Right ventricle myocardium superior (tissue), 1 donor: ENCODE measurements at regions of chrX and their contacts with region 1.

Region 1: DNA sequence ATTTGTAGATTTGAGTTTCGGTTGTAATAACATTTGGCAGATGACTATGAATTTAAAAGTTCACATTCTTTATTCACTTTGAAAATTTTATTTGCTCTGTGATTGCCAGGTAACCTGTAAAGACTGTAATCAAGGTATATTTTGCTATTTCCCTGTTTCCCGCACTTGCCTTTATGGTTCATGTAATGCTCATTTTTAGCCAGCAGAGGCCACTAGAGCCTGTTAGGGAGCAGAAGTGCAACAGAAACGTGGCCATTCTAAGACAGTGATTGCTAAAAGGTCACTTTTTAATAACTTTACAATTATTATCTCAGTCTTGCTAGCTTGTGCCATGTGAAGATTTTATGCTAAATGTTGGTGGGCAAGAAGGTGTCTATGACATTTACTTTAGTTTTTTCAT is 12.4 kb downstream of the YIPF6 start:
- DNase-seq: no peak
- ATAC-seq: no peak

Region 2: DNA sequence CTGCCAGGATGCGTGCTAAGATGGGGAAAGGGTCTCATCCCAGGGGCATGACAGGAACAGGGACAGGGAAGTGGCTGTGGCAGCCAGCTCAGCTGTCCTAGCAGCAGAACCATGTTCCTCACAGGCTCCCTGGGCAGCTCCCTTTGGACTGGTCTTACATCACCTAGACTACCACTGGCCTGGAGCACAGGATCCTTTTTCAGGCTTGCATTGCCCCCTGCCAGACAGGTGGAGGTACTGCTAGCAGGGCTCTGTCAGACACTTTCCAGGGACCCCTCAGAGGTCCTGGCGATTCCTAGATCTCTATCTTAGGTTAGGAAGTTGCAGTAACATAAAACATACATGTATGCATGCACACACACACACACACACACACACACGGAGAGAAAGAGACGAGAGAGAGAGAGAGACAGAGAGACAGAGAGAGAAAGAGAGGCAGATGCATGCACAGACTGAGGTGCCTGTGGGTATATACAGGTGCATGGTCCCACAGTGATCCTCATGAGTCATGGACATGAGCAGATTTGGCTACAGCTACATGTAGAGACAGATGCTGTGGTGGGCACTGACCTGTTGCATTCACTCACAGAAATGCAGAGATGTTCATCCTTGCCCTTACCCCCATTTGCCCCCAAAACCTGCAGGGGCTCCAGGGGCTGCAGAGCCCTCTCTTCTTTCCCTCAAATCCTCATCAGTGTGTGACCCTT is 199.8 kb after region 1 on chrX:
- intact Hi-C with region 1: loop called (anchors 10 kb)
- DNase-seq: no peak
- ATAC-seq: peak; percentile 70